Activated CD8-positive, alpha-beta T cell treated with anti-CD3 and anti-CD28 coated beads, Interleukin-2, amount 10 ng/mL, durations not matched to agents 7 days and 5 days (primary cell): ENCODE measurements at regions of chr11 and their contacts with region 1.

Region 1: DNA sequence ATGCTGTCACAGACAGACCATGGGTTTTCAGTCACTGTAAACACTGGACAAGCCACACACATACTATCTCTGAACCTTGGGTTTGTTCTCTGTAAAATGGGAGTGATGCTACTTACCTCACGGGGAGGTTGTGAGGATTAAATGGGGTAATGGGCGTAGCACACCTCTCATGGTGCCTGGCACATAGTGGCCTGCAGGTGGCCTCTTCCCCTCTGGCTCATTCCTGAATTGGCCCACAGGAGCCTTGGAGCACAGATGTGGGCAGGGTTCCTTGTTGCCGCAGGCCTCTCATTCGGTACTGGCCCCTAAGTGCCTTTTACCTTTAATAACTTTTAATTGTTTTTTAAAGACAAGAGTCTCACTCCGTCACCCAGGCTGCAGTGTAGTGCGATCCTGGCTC is 11.7 kb downstream of the MICAL2 start:
- DNase-seq: no peak
- ATAC-seq: peak; percentile 40
- H3K4me3 Mint-ChIP-seq: no peak overlapping the region
- H3K27ac Mint-ChIP-seq: no peak overlapping the region
- H3K4me1 Mint-ChIP-seq: peaks cover 64% of the 10 kb centered on the region
- H3K27me3 Mint-ChIP-seq: no peaks in the 10 kb centered on the region

Region 2: GRCh38 chr11:12066799-12067508 is 55.1 kb before region 1 on chr11:
- CTCF ChIA-PET with region 1: no interaction called
- POLR2A ChIA-PET with region 1: no interaction called
- DNase-seq: no peak
- ATAC-seq: no peak
- H3K4me3 Mint-ChIP-seq: no peak overlapping the region
- H3K27ac Mint-ChIP-seq: no peak overlapping the region
- H3K4me1 Mint-ChIP-seq: peaks cover 16% of the 10 kb centered on the region
- H3K27me3 Mint-ChIP-seq: peaks cover 8% of the 10 kb centered on the region

Region 3: DNA sequence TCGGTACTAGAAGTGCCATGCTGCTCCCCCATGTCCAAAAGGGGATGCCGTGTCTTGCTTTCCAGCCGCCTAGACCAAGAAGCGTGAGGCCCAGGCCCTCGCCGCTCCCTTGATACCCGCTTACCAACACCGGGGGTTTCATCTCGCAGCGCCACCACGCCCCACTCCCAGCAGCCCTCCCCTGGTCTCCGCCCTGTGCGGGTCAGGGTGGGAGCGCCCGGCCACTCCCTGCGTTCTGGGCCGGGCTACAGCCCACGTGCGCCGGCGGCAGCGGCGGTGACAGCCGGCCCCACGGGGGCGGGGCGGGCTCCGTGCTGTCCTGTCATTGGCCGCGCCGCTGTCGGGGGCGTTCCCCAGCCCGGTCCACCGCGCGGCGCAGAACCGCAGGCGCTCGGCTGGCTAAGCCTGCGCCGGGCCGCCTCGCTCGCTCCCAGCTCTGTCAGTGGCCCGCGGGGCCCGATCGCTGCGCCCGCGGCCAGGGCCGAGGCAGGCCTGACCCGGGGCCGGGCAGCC is 11.8 kb before region 1 on chr11 and contains the start of gene MICAL2:
- CTCF ChIA-PET with region 1: interaction called, 17 read pairs
- POLR2A ChIA-PET with region 1: interaction called, 5 read pairs
- DNase-seq: peak; percentile 88
- ATAC-seq: peak; percentile 97
- H3K4me3 Mint-ChIP-seq: peak within 1 kb of the TSS; percentile 80
- H3K27ac Mint-ChIP-seq: peak within 1 kb of the TSS; percentile 89
- H3K4me1 Mint-ChIP-seq: peaks cover 47% of the 10 kb centered on the region
- H3K27me3 Mint-ChIP-seq: no peaks in the 10 kb centered on the region
- total RNA-seq, gene MICAL2: 34.9 to 37.5 TPM